Activated B cell treated with CpG ODN at 0.5 μM for 24 hours (primary cell): ENCODE measurements at regions of chr13 and their contacts with region 1.

Region 1: DNA sequence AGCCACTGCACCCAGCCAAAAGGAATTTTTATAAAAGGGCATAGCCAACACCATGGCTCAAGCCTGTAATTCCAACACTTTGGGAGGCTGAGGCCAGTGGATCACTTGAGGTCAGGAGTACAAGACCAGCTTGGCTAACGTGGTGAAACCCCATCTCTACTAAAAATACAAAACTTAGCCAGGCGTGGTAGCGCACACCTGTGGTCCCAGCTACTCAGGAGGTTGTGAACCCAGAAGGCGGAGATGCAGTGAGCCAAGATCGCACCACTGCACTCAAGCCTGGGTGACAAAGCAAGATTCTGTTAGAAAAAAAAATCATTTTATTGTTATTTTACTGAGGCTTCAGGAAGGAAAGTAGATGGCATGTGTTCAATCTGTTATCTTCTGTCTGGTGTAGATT is 31.3 kb upstream of the FOXO1 start:
- DNase-seq: no peak
- ATAC-seq: peak; percentile 34
- H3K4me3 Mint-ChIP-seq: no peak overlapping the region
- H3K27ac Mint-ChIP-seq: no peak overlapping the region
- H3K4me1 Mint-ChIP-seq: peaks cover 24% of the 10 kb centered on the region
- H3K27me3 Mint-ChIP-seq: no peaks in the 10 kb centered on the region
- CTCF ChIP-seq: no peak

Region 2: GRCh38 chr13:40613192-40613818 is 84.4 kb before region 1 on chr13:
- CTCF ChIA-PET with region 1: no interaction called
- POLR2A ChIA-PET with region 1: no interaction called
- intact Hi-C with region 1: no loop called
- DNase-seq: no peak
- ATAC-seq: peak; percentile 90
- H3K4me3 Mint-ChIP-seq: peak overlapping the region; percentile 71
- H3K27ac Mint-ChIP-seq: peak overlapping the region; percentile 88
- H3K4me1 Mint-ChIP-seq: peaks cover 90% of the 10 kb centered on the region
- H3K27me3 Mint-ChIP-seq: no peaks in the 10 kb centered on the region
- CTCF ChIP-seq: no peak

Region 3: DNA sequence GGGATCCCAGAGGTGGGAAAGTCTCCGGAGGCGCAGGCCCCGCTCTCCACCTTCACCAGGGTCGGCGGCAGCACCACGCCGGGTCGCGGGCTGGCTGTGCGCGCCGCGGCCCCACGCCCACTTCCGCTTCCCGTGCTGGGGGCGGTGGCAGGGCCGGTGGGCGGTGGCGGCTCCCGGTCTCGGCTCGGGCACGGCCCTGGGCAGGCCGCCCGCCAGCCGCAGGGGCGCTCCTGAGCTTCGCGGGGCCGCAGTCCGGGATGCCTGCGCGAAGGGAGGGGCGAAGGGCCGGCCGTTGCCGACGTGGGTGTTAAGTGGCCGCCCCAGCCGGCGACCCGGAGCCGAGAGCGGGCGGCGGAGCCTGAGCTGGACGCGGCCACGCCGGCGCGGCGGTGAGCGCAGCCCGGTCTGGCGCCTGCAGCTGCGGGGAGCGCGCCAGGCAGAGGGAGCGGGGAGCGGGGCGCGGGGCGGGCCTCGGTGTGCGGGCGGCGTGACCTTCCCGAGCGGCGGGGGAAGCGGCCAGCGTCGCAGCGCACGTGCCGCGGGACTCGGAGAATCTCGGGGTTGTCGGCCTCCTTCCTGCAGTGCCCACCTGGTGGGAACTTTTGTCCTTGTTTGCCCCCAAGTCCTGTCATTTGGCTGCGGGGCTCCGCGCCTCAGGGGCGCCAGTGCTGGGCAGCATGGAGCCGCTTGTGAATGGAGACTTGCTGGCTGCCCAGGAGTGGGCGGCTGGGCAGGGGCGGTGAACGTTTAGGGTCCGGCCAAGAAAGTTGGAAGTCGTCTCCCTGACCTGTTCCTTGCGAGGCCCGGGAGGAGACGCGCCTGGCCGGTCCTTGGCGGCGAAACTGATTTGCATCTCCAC is 91.8 kb after region 1 on chr13 and contains the start of gene SLC25A15:
- CTCF ChIA-PET with region 1: no interaction called
- POLR2A ChIA-PET with region 1: interaction called, 16 read pairs
- intact Hi-C with region 1: no loop called
- DNase-seq: peak; percentile 82
- ATAC-seq: peak; percentile 95
- H3K4me3 Mint-ChIP-seq: peak within 1 kb of the TSS; percentile 83
- H3K27ac Mint-ChIP-seq: peak within 1 kb of the TSS; percentile 53
- H3K4me1 Mint-ChIP-seq: peaks cover 9% of the 10 kb centered on the region
- H3K27me3 Mint-ChIP-seq: no peaks in the 10 kb centered on the region
- CTCF ChIP-seq: no peak
- total RNA-seq, gene SLC25A15: 4.6 and 4.9 TPM in 2 replicates